PC-9 (cell line): ENCODE measurements at regions of chr3 and their contacts with region 1.

Region 1: DNA sequence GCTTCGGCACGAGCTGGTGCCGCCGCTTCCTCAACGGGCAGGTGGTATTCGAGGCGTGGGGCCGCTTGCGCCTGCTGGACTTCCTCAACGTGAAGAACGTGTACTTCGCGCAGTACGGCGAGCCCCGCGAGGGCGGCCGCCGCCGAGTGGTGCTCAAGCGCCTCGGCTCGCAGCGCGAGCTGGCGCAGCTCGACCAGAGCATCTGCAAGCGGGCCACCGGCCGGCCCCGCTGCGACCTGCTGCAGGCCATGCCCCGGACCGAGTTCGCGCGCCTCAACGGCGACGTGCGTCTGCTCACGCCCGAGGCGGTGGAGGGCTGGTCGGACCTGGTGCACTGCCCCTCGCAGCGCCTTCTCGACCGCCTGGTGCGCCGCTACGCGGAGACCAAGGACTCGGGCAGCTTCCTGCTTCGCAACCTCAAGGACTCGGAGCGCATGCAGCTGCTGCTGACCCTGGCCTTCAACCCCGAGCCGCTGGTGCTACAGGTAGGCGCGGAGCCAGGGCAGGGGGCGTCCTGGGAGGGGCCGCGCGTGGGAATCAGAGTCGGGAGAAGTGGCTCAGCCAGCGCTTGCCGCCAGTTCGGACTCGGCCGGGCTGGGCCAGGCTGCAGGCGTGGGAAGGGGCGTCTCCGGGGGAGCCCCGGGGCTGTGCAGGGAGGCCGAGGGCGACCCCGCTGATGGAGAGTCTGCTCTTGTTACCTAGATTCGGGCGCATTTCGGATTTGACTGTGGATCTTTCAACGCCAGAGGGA is 1.1 kb downstream of the DIPK2A start:
- DNase-seq: peak; percentile 65 to 70
- H3K4me3 ChIP-seq: peak overlapping the region; percentile 90
- H3K27ac ChIP-seq: peak overlapping the region; percentile 70
- H3K4me1 ChIP-seq: peaks cover 37% of the 10 kb centered on the region
- H3K27me3 ChIP-seq: no peaks in the 10 kb centered on the region
- CTCF ChIP-seq: peak; percentile 43; the same call in 1 of the 2 replicates

Region 2: DNA sequence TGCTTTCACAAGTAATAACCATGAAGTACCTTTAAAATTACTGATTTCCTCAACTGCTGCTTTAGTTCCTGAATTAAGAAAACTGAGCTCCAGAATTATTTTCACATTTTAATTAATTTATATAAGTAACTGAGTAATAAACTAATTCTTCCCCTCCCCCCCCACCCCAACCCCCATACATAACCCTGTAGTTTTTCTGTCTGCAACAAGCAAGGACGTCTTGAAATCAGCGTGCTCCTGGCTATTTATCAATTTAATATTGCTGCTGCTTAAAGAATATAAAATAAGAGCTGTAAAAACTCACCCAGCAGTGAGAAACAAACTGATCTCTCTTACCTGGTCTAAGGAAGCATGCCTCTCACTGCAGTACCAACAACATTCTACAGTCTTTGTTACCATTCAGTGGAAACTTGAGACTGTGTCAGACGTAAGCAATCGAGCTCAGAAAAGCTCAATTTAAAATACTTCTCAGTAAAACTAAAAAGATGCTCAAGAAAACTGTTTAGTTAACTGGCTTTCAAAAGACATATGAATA is 1944.4 kb before region 1 on chr3:
- CTCF ChIA-PET with region 1: no interaction called
- POLR2A ChIA-PET with region 1: interaction called, 12 read pairs
- intact Hi-C with region 1: no loop called
- DNase-seq: peak in 1 of 2 experiments; percentile 35
- H3K4me3 ChIP-seq: peak overlapping the region; percentile 39; the same call in 1 of the 2 replicates
- H3K27ac ChIP-seq: no peak overlapping the region
- H3K4me1 ChIP-seq: no peaks in the 10 kb centered on the region
- H3K27me3 ChIP-seq: no peaks in the 10 kb centered on the region
- CTCF ChIP-seq: no peak

Region 3: DNA sequence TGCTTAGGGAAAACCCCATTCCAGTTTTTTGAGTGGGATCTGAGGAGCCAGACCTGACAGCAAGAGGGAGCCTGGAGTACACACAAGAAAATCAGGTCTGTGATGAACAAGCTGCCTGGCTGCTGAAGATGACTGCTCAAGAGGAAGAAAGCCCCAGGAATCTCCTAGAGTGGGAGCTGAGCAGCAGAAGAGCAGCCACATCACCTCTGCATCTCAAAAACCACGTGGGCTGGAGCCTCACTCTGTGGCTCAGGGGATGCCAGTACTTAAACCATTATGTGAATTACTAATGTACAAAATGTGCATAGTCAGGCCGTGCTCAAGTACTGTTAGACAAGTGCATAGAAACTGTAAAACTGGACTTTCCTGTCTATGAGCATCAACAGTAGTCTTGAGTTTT is 176.8 kb before region 1 on chr3:
- CTCF ChIA-PET with region 1: interaction called, 3 read pairs
- POLR2A ChIA-PET with region 1: interaction called, 6 read pairs
- intact Hi-C with region 1: loop called (anchors 1 kb)
- DNase-seq: peak in 1 of 2 experiments; percentile 14
- H3K4me3 ChIP-seq: no peak overlapping the region
- H3K27ac ChIP-seq: no peak overlapping the region
- H3K4me1 ChIP-seq: no peaks in the 10 kb centered on the region
- H3K27me3 ChIP-seq: no peaks in the 10 kb centered on the region
- CTCF ChIP-seq: no peak

Region 4: GRCh38 chr3:144692488-144692887 is 719.8 kb after region 1 on chr3:
- CTCF ChIA-PET with region 1: no interaction called
- POLR2A ChIA-PET with region 1: no interaction called
- intact Hi-C with region 1: loop called (anchors 10 kb)
- DNase-seq: no peak
- H3K4me3 ChIP-seq: no peak overlapping the region
- H3K27ac ChIP-seq: no peak overlapping the region
- H3K4me1 ChIP-seq: no peaks in the 10 kb centered on the region
- H3K27me3 ChIP-seq: no peaks in the 10 kb centered on the region
- CTCF ChIP-seq: no peak

Region 5: GRCh38 chr3:144963810-144964209 is 991.1 kb after region 1 on chr3:
- CTCF ChIA-PET with region 1: no interaction called
- POLR2A ChIA-PET with region 1: interaction called, 16 read pairs
- intact Hi-C with region 1: no loop called
- DNase-seq: no peak
- H3K4me3 ChIP-seq: no peak overlapping the region
- H3K27ac ChIP-seq: no peak overlapping the region
- H3K4me1 ChIP-seq: no peaks in the 10 kb centered on the region
- H3K27me3 ChIP-seq: no peaks in the 10 kb centered on the region
- CTCF ChIP-seq: no peak

Region 6: DNA sequence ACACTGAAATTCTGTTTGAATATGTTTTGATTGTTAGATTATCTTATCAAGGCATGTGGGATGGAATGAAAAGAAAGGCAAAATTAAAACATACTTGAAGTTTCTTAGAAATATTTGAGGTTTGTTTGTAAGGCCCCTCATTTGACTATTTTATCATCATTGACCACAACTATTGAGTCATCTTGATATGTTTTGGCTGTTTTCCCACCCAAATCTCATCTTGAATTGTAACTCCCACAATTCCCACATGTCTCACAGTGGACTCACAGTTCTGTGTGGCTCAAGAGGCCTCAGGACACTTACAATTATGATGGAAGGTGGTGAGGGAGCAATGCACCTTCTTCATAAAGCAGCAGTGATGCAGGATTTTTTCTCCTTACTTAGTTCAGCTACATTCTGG is 1271.2 kb after region 1 on chr3:
- CTCF ChIA-PET with region 1: interaction called, 21 read pairs
- POLR2A ChIA-PET with region 1: no interaction called
- intact Hi-C with region 1: no loop called
- DNase-seq: no peak
- H3K4me3 ChIP-seq: no peak overlapping the region
- H3K27ac ChIP-seq: no peak overlapping the region
- H3K4me1 ChIP-seq: no peaks in the 10 kb centered on the region
- H3K27me3 ChIP-seq: no peaks in the 10 kb centered on the region
- CTCF ChIP-seq: no peak

Region 7: DNA sequence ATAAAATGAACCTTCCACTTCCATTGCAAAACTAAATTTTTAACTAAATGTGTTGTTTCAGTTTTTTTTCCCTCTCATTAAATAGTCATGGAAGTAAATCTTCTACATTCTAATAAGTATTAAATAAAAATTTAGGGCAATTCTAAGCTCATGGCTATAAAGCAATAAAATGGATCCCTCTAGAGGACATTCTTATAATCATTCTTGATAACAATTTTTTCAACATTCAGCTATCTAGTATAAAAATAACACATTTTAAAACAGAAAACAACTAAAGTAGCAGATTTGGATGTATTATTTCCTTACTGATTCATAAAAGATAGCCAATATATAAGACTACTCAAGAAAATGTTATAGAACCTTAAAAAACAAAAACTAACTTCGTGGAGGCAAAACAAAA is 1795.2 kb after region 1 on chr3:
- CTCF ChIA-PET with region 1: no interaction called
- POLR2A ChIA-PET with region 1: no interaction called
- intact Hi-C with region 1: loop called (anchors 5 kb)
- DNase-seq: no peak
- H3K4me3 ChIP-seq: no peak overlapping the region
- H3K27ac ChIP-seq: no peak overlapping the region
- H3K4me1 ChIP-seq: no peaks in the 10 kb centered on the region
- H3K27me3 ChIP-seq: no peaks in the 10 kb centered on the region
- CTCF ChIP-seq: peak; percentile 62